Pancreas (tissue), 10 donors: ENCODE measurements at regions of chr12 and their contacts with region 1.

Region 1: DNA sequence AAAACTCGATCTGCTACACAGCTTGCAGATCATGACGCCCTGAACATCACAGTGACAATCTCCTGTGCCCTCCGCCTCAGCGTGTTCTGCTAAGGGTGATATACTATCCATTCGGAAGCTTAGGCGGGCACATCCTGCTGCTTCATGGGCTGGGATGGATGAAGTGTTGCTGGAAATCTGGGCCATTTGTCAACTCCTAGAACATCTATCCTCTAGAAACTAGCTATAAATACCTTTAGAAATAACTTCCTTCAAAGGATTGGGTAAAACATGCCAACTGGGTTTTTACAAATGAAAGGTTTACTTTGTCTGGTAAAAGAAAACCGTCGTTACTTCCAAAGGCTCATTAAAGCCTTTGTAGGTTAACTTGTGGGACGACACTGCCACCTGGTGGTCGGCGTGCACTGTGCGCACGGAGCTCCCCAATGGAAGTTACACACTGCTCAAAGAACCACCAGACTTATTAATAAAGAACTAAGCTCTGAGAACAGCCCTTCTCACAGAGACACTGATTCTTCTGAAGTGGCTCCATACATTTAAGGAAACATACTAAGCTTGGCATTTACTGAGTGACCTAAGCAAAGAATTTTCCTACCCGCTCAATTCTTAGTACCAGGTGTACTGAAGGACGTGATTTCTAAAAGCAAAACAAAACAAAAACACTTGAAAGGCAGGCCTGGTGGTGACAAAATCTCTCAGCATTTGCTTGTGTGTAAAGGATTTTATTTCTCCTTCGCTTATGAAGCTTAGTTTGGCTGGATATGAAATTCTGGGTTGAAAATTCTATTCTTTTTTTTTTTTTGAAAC is 21.6 kb upstream of the CACNA2D4 start:
- DNase-seq: peak; percentile 77 to 98 (median 90)
- ATAC-seq: peak; percentile 33 to 78 (median 64)
- H3K4me3 ChIP-seq: no peak overlapping the region
- H3K27ac ChIP-seq: no peak overlapping the region
- H3K4me1 ChIP-seq: peaks cover 8 to 10% (median 9%) of the 10 kb centered on the region in 3 donors
- H3K27me3 ChIP-seq: no peaks in the 10 kb centered on the region
- CTCF ChIP-seq: peak; percentile 92 to 98 (median 97)

Region 2: GRCh38 chr12:1644534-1645438 is 295.2 kb before region 1 on chr12:
- intact Hi-C with region 1: loop called in 1 of 3 experiments (anchors 10 kb)
- DNase-seq: peak; percentile 60 to 81 (median 66)
- ATAC-seq: peak in 3 of 4 donors; percentile 78 to 88 (median 80)
- H3K4me3 ChIP-seq: no peak overlapping the region
- H3K27ac ChIP-seq: no peak overlapping the region
- H3K4me1 ChIP-seq: no peaks in the 10 kb centered on the region
- H3K27me3 ChIP-seq: no peaks in the 10 kb centered on the region
- CTCF ChIP-seq: no peak

Region 3: DNA sequence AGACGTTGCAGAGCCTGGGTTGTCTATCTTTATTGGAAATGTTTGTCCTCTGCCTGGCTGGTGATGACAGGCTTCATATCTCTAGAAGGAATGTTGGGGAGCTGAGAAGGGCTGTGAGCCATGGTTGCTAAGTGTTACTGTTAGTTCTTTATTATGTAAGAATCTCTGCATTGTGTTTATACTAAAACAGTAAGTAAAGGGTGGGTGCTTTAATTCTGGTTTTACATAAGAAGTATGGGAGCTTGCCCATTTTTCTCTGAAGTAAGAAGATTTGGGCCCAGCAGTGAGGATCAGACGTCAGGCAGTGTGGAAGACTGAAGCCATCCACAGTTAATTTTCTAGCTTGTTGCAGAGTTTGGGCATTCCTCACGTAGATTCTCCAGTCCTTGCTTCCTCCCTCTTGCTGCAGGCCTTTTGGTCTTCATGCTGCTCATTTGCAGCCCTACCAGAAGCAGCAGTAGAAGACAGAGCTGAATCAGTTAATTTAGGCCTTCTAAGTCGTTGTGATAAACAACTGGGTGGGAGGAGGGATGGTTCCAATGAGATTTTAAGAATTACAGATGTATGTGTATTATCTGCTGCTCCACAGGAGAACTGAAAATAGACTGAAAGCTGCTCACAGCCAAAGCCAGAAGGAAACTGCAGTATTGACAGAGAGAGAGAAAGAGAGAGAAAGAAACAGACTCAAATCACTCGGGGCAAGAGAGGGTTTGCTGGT is 289.6 kb before region 1 on chr12:
- intact Hi-C with region 1: loop called in 2 of 3 experiments (anchors 10 kb)
- DNase-seq: no peak
- ATAC-seq: no peak
- H3K4me3 ChIP-seq: no peak overlapping the region
- H3K27ac ChIP-seq: no peak overlapping the region
- H3K4me1 ChIP-seq: no peaks in the 10 kb centered on the region
- H3K27me3 ChIP-seq: no peaks in the 10 kb centered on the region
- CTCF ChIP-seq: no peak

Region 4: DNA sequence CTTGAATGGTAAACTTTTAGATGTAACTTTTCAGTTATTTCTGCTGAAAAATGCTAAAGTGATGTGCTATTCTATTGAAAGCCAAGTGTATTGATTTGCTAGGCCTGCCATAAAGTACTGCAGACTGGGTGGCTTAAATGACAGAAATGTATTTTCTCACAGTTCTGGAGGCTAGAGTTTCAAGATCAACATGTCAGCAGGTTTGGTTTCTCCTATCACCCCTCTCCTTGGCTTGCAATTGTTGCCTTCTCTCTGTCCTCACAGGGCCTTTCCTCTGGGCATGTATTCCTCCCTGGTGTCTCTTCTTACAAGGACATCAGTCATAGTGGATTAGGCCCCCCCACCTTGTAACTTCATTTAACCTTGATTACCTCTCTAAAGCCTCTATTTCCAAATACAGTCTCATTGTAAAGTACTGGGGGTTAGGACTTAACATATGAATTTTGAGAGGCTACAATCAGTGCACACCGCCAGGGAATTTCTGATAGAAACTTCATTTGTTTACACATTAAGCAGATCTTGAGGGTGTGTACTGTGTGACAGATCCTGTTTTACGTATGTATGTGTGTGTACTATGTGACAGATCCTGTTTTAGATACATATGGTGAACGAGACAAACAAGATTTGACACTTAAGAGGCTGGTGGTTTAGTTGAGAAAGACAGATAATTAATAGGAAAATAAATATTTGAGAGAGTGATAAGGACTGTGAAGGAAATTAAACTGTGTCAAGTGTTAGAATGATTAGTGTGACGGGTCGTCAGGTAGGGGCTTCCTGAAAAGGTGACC is 199.6 kb before region 1 on chr12:
- intact Hi-C with region 1: no loop called
- DNase-seq: no peak
- ATAC-seq: peak; percentile 37 to 73 (median 52)
- H3K4me3 ChIP-seq: no peak overlapping the region
- H3K27ac ChIP-seq: peak overlapping the region in 1 of 4 donors; percentile 9
- H3K4me1 ChIP-seq: peaks cover 17 to 25% (median 20%) of the 10 kb centered on the region in 3 donors
- H3K27me3 ChIP-seq: no peaks in the 10 kb centered on the region
- CTCF ChIP-seq: no peak

Region 5: GRCh38 chr12:1795785-1796514 is 144.1 kb before region 1 on chr12:
- intact Hi-C with region 1: loop called in 2 of 3 experiments (anchors 5 kb)
- DNase-seq: peak; percentile 91 to 99 (median 95)
- ATAC-seq: peak; percentile 94 to 96 (median 95)
- H3K4me3 ChIP-seq: peak overlapping the region; percentile 37 to 61 (median 54)
- H3K27ac ChIP-seq: peak overlapping the region; percentile 2 to 66 (median 59)
- H3K4me1 ChIP-seq: peaks cover 0 to 6% (median 3%) of the 10 kb centered on the region in 3 donors
- H3K27me3 ChIP-seq: no peaks in the 10 kb centered on the region
- CTCF ChIP-seq: peak; percentile 98 to 99 (median 98)

Region 6: GRCh38 chr12:1880153-1880845 is 59.7 kb before region 1 on chr12:
- intact Hi-C with region 1: no loop called
- DNase-seq: no peak
- ATAC-seq: no peak
- H3K4me3 ChIP-seq: no peak overlapping the region
- H3K27ac ChIP-seq: no peak overlapping the region
- H3K4me1 ChIP-seq: no peaks in the 10 kb centered on the region
- H3K27me3 ChIP-seq: no peaks in the 10 kb centered on the region
- CTCF ChIP-seq: no peak